Activated CD4-positive, alpha-beta memory T cell treated with anti-CD3 and anti-CD28 coated beads for 36 hours (primary cell): ENCODE measurements at regions of chr17 and their contacts with region 1.

Region 1: DNA sequence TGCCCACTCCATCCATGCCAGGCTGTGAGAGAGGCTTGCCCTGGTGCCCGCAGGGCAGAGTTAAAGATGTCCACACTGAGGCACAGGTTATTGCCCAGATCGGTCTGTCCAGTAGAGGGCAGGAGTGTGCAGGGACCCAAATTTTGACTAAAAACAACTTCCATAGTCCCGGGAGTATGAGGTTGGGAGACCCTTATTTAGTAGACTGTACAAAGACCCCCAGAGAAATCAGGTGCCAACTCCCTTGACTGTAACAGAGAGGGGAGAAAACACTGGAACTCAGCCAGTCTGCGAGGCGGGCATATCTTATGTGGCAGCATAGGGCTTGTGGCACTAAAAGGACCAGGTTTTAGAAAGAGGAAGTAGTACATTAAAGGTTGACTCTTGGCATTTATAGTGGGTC is 43.4 kb downstream of the HNF1B start:
- DNase-seq: peak; percentile 68
- H3K4me3 Mint-ChIP-seq: no peak overlapping the region
- H3K27ac Mint-ChIP-seq: no peak overlapping the region
- H3K4me1 Mint-ChIP-seq: peaks cover 13% of the 10 kb centered on the region
- H3K27me3 Mint-ChIP-seq: peaks cover 26% of the 10 kb centered on the region

Region 2: GRCh38 chr17:37744961-37745800 is 43.7 kb after region 1 on chr17 and contains the start of gene HNF1B:
- CTCF ChIA-PET with region 1: no interaction called
- POLR2A ChIA-PET with region 1: interaction called, 4 read pairs
- intact Hi-C with region 1: loop called (anchors 5 kb)
- DNase-seq: peak; percentile 38
- H3K4me3 Mint-ChIP-seq: peak within 1 kb of the TSS; percentile 23
- H3K27ac Mint-ChIP-seq: no peak within 1 kb of the TSS
- H3K4me1 Mint-ChIP-seq: peaks cover 19% of the 10 kb centered on the region
- H3K27me3 Mint-ChIP-seq: peaks cover 58% of the 10 kb centered on the region
- total RNA-seq, gene HNF1B: not detected

Region 3: GRCh38 chr17:37802712-37803416 is 101.4 kb after region 1 on chr17:
- CTCF ChIA-PET with region 1: no interaction called
- POLR2A ChIA-PET with region 1: no interaction called
- intact Hi-C with region 1: no loop called
- DNase-seq: no peak
- H3K4me3 Mint-ChIP-seq: no peak overlapping the region
- H3K27ac Mint-ChIP-seq: no peak overlapping the region
- H3K4me1 Mint-ChIP-seq: no peaks in the 10 kb centered on the region
- H3K27me3 Mint-ChIP-seq: peaks cover 5% of the 10 kb centered on the region